ENCODE measurements at regions of chr1 and their contacts with region 1.

Region 1: GRCh38 chr1:24688621-24689195 is 45.6 kb downstream of the SRRM1 start:
- DNase-seq: peak; percentile 80

Region 2: GRCh38 chr1:24825174-24825573 is 136.5 kb after region 1 on chr1:
- CTCF ChIA-PET with region 1: interaction called, 29 read pairs
- POLR2A ChIA-PET with region 1: interaction called, 3 read pairs
- DNase-seq: no peak

Region 3: GRCh38 chr1:24830680-24831272 is 142.1 kb after region 1 on chr1:
- CTCF ChIA-PET with region 1: interaction called, 33 read pairs
- POLR2A ChIA-PET with region 1: interaction called, 3 read pairs
- DNase-seq: peak; percentile 27

Measured in HEK293T (cell line).